ENCODE measurements at regions of chr7 and their contacts with region 1.

Region 1: GRCh38 chr7:31735991-31736982 is 49.3 kb downstream of the PPP1R17 start:
- DNase-seq: peak; percentile 47
- H3K4me3 ChIP-seq: no peak overlapping the region
- H3K27ac ChIP-seq: no peak overlapping the region
- H3K4me1 ChIP-seq: no peaks in the 10 kb centered on the region
- H3K27me3 ChIP-seq: no peaks in the 10 kb centered on the region
- CTCF ChIP-seq: peak; percentile 78 to 85 (median 81)
- EP300 ChIP-seq: no peak
- POLR2A ChIP-seq: no peak

Region 2: DNA sequence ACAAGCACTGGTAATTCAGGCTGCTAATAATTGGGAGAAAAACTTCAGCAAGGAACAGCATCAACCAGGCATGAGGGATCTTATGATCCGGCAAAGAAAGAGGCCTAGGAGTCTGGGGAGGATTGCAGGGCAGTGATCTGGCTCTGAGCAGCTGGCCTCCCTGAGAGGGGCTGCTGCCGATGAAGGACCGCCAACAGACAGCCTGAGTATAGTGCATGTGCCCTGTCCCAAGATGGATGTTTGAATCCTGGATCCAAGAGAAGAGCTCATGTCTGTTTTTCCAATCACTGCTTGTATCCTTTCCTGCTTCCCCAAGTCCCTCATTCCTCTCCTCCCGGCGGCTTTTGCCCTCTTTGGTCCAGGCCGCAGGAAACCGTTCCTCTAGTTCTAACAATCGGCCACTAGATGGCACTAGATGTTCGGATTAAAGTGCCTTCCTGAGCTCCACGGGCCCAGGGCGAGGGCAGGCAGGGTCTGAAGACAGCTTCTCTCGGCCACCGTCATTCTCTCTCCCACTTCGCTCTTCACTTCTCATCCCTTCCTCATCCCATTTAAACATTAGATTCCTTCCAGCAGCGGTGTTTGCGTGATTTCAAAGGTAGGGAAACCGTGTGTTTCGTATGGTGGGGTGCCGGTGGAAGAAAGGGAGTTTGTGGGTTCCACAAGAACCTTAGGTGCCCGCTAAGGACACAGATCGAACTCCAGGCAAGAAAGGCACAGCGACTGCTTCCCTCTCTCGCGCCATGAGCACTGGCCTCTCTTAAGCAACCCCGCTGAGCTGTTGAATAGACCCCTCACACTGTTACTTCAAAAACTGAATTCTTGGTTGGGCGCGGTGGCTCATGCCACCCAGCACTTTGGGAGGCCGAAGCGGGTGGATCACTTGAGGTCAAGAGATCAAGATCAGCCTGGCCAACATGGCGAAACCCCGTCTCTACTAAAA is 601.8 kb before region 1 on chr7:
- in situ Hi-C with region 1: loop called in 3 of 4 experiments (anchors 10 to 25 kb)
- intact Hi-C with region 1: loop called (anchors 10 kb)
- DNase-seq: peak; percentile 61
- H3K4me3 ChIP-seq: no peak overlapping the region
- H3K27ac ChIP-seq: no peak overlapping the region
- H3K4me1 ChIP-seq: peaks cover 0 to 7% (median 0%) of the 10 kb centered on the region in 4 donors
- H3K27me3 ChIP-seq: no peaks in the 10 kb centered on the region
- CTCF ChIP-seq: peak; percentile 65 to 75 (median 70)
- EP300 ChIP-seq: no peak
- POLR2A ChIP-seq: no peak

Region 3: DNA sequence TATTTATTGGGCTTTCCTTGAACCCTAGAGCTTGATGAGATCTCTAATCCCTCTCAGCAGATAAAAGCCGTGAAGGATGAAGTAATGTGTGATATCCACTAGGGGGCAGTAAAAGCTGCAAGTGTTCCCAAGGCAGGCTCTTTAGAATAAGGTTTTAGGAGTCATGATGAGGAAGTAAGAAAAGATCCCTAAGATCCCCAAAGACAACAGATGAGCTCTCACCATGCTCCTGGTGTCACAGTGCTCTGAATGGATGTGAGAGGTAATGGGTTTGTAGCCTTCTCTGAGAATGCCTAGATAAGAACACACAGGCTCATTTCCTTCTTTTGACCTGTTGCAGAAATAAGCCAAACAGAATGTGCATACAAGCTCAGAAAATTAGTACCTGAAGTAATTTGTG is 292.8 kb before region 1 on chr7:
- in situ Hi-C with region 1: loop called in 1 of 4 experiments (anchors 10 kb)
- intact Hi-C with region 1: no loop called
- DNase-seq: no peak
- H3K4me3 ChIP-seq: no peak overlapping the region
- H3K27ac ChIP-seq: no peak overlapping the region
- H3K4me1 ChIP-seq: peaks cover 0 to 10% (median 3%) of the 10 kb centered on the region in 4 donors
- H3K27me3 ChIP-seq: no peaks in the 10 kb centered on the region
- CTCF ChIP-seq: peak; percentile 65 to 79 (median 72)
- EP300 ChIP-seq: no peak
- POLR2A ChIP-seq: no peak